Kidney (tissue), 22 donors: ENCODE measurements at regions of chr5 and their contacts with region 1.

Region 1: GRCh38 chr5:31581498-31582099 is 49.5 kb downstream of the C5orf22 start:
- DNase-seq: peak in 2 of 5 donors; percentile 50 to 72
- H3K4me3 ChIP-seq: no peak overlapping the region
- H3K27ac ChIP-seq: no peak overlapping the region
- H3K4me1 ChIP-seq: no peaks in the 10 kb centered on the region
- H3K27me3 ChIP-seq: no peaks in the 10 kb centered on the region
- CTCF ChIP-seq: peak; percentile 51

Region 2: DNA sequence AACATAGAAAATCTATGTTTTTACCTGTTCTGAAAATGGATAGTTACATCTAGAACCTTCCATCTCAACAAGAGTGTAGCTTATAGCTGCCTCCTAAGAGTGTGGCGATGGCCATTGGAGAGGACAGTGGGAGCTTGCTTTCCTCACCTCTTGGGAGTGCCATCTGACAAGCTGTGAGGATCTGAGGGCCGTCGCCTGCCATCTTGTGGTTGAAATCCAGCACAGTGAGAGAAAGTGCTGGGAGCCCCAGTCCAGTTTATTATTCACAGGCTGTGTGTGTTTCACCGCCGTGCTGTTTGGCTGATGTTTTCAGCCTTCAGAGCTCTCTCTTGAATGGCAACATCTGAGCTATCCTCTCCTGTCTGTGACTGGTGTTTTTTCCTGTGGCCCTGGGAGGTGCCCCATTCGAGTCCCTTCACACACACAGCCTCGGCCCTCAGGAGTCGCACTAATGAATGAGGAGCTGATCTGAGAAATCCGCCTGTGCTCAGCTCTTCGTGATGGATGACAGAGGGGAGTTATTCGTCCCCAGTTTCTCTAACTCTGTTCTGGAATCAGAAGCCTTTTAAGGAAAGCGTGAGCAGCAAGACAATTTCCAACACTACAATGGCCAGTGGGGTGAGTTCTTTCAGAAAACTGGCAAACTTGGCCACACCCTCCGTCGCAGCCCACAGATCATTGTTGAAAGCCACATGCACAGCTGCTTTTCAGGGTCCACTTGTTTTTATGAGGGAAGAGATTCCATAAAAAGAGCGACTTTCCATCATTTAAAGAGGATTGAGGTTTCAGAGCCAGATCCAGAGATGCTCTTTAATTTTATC is 227.7 kb after region 1 on chr5:
- intact Hi-C with region 1: loop called (anchors 10 kb)
- DNase-seq: peak in 4 of 5 donors; percentile 83 to 93 (median 90)
- H3K4me3 ChIP-seq: no peak overlapping the region
- H3K27ac ChIP-seq: no peak overlapping the region
- H3K4me1 ChIP-seq: peaks cover 0 to 7% (median 3%) of the 10 kb centered on the region in 3 donors
- H3K27me3 ChIP-seq: no peaks in the 10 kb centered on the region
- CTCF ChIP-seq: peak; percentile 65

Region 3: GRCh38 chr5:32092938-32093812 is 511.6 kb after region 1 on chr5:
- intact Hi-C with region 1: loop called (anchors 10 kb)
- DNase-seq: peak in 4 of 5 donors; percentile 74 to 92 (median 82)
- H3K4me3 ChIP-seq: no peak overlapping the region
- H3K27ac ChIP-seq: no peak overlapping the region
- H3K4me1 ChIP-seq: peaks cover 0 to 4% (median 0%) of the 10 kb centered on the region in 3 donors
- H3K27me3 ChIP-seq: no peaks in the 10 kb centered on the region
- CTCF ChIP-seq: peak; percentile 79